Heart right ventricle (tissue), 16 donors: ENCODE measurements at regions of chr12 and their contacts with region 1.

Region 1: GRCh38 chr12:108803428-108804105 is 53.8 kb downstream of the SSH1 start:
- DNase-seq: peak in 1 of 2 donors; percentile 91
- ATAC-seq: peak; percentile 53 to 86 (median 76)
- H3K4me3 ChIP-seq: peak overlapping the region in 3 of 10 donors; percentile 23 to 37 (median 24)
- H3K27ac ChIP-seq: peak overlapping the region; percentile 79 to 91 (median 87)
- H3K4me1 ChIP-seq: peaks cover 20 to 85% (median 61%) of the 10 kb centered on the region in 9 donors
- H3K27me3 ChIP-seq: no peaks in the 10 kb centered on the region
- CTCF ChIP-seq: peak; percentile 92 to 98 (median 96)

Region 2: GRCh38 chr12:108562348-108563135 is 241.0 kb before region 1 on chr12 and contains the start of gene ISCU:
- intact Hi-C with region 1: loop called in 7 of 10 experiments (anchors 2 to 10 kb)
- DNase-seq: peak; percentile 98 to 99
- ATAC-seq: peak; percentile 88 to 95 (median 92)
- H3K4me3 ChIP-seq: peak within 1 kb of the TSS; percentile 57 to 99 (median 90)
- H3K27ac ChIP-seq: peak within 1 kb of the TSS; percentile 78 to 97 (median 94)
- H3K4me1 ChIP-seq: peaks cover 5 to 80% (median 67%) of the 10 kb centered on the region in 9 donors
- H3K27me3 ChIP-seq: no peaks in the 10 kb centered on the region
- CTCF ChIP-seq: no peak
- total RNA-seq, gene ISCU: 321 to 630 (median 522) TPM

Region 3: GRCh38 chr12:108664338-108665258 is 139.0 kb before region 1 on chr12:
- intact Hi-C with region 1: loop called (anchors 1 to 5 kb)
- DNase-seq: peak; percentile 53 to 89
- ATAC-seq: peak; percentile 88 to 96 (median 92)
- H3K4me3 ChIP-seq: peak overlapping the region in 1 of 10 donors; percentile 14
- H3K27ac ChIP-seq: peak overlapping the region; percentile 36 to 86 (median 78)
- H3K4me1 ChIP-seq: peaks cover 7 to 71% (median 56%) of the 10 kb centered on the region in 9 donors
- H3K27me3 ChIP-seq: no peaks in the 10 kb centered on the region
- CTCF ChIP-seq: peak; percentile 79 to 99 (median 95)

Region 4: DNA sequence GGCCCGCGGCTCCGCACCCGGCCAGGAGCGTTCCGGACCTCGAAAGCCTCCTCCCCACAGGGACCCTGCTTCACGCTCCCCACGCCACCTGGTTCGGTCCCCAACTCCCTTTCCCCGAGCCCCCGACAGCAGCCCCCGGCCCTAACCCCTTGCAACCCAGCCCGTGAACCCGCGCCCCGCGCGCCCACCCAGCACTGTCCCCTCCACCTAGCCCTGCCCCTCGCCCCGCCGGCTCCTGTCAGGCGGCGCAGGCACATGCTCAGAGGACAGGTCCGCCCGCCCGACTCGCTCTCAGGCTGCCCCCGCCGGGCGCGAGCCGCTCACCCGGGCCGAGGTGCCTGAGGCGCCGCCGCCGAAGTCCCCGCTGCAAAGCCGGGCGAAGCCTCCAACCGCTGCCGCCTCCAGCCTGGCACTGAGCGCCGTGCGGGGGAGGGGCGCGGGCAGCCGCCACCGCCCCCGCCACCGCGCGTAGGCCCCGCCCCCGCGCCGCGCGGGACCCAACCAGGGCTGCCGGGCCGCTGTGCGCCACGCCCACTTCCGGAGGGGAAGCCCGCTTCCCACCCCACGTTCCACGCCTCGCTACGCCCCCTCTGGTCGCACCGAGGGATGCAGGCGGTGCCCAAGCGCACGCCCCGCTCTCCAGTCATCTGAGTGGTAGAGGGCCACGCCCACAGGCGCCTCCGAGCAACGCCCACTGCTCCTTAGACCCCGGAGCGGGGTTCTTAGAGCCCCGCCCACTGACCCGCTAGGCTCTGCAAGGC is 72.3 kb before region 1 on chr12 and contains the start of gene CORO1C:
- intact Hi-C with region 1: loop called in 7 of 10 experiments (anchors 1 to 5 kb)
- DNase-seq: peak; percentile 96 to 99
- ATAC-seq: peak; percentile 81 to 92 (median 88)
- H3K4me3 ChIP-seq: peak within 1 kb of the TSS; percentile 76 to 98 (median 91)
- H3K27ac ChIP-seq: peak within 1 kb of the TSS; percentile 95 to 99 (median 98)
- H3K4me1 ChIP-seq: peaks cover 0 to 58% (median 27%) of the 10 kb centered on the region in 9 donors
- H3K27me3 ChIP-seq: no peaks in the 10 kb centered on the region
- CTCF ChIP-seq: peak; percentile 76 to 96 (median 93)
- total RNA-seq, gene CORO1C: 50.2 to 88.6 (median 59.1) TPM

Region 5: GRCh38 chr12:108757856-108758255 is 45.7 kb before region 1 on chr12:
- intact Hi-C with region 1: no loop called
- DNase-seq: no peak
- ATAC-seq: no peak
- H3K4me3 ChIP-seq: no peak overlapping the region
- H3K27ac ChIP-seq: no peak overlapping the region
- H3K4me1 ChIP-seq: no peaks in the 10 kb centered on the region
- H3K27me3 ChIP-seq: no peaks in the 10 kb centered on the region
- CTCF ChIP-seq: no peak

Region 6: DNA sequence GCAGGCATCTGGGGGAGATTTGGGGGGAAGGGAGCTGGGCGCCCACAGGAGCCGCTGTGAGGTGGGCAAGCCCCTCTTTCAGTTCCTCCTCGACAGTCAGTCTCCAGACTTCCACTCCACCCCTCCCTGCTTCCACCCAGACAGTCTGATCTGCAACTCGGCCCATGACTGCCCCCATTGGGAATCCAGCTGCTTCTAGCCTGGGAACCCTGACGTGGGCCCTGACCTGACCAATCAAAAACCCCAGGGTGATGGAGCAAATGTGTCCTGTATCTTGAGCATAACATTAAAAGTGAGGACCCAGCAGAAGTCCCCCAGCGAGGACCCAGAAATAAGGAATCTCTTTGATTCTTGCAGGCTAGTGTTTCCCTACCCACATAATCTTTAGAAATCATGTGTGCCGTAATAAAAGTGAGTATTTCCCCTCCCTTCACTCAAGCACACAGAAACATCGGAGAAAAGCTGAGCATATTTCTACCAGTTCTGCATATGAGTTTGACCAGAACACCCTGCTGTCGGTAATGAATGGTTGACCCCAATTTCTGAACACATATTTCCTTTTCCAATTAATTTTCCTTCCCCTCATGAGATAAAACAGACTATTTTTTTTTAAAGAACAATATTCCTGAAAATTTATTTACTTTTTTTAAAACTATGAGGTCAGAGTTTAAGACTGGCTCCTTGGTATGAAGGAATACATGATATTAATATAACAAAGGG is 47.4 kb after region 1 on chr12:
- intact Hi-C with region 1: loop called in 9 of 10 experiments (anchors 1 to 10 kb)
- DNase-seq: peak; percentile 62 to 82
- ATAC-seq: peak in 7 of 8 donors; percentile 20 to 56 (median 53)
- H3K4me3 ChIP-seq: peak overlapping the region in 4 of 10 donors; percentile 35 to 40 (median 39)
- H3K27ac ChIP-seq: peak overlapping the region in 8 of 10 donors; percentile 65 to 98 (median 97)
- H3K4me1 ChIP-seq: peaks cover 50 to 96% (median 89%) of the 10 kb centered on the region in 9 donors
- H3K27me3 ChIP-seq: no peaks in the 10 kb centered on the region
- CTCF ChIP-seq: peak in 5 of 9 donors; percentile 17 to 45 (median 38)

Region 7: GRCh38 chr12:108950991-108951739 is 147.6 kb after region 1 on chr12:
- intact Hi-C with region 1: loop called in 6 of 10 experiments (anchors 1 to 10 kb)
- DNase-seq: peak; percentile 58 to 63
- ATAC-seq: peak; percentile 53 to 81 (median 64)
- H3K4me3 ChIP-seq: peak overlapping the region in 1 of 10 donors; percentile 20
- H3K27ac ChIP-seq: peak overlapping the region in 1 of 10 donors; percentile 39
- H3K4me1 ChIP-seq: peaks cover 0 to 26% (median 12%) of the 10 kb centered on the region in 9 donors
- H3K27me3 ChIP-seq: peaks cover 0 to 3% (median 0%) of the 10 kb centered on the region in 7 donors
- CTCF ChIP-seq: peak; percentile 77 to 96 (median 90)

Region 8: GRCh38 chr12:109004017-109004416 is 200.4 kb after region 1 on chr12:
- intact Hi-C with region 1: no loop called
- DNase-seq: no peak
- ATAC-seq: no peak
- H3K4me3 ChIP-seq: no peak overlapping the region
- H3K27ac ChIP-seq: no peak overlapping the region
- H3K4me1 ChIP-seq: no peaks in the 10 kb centered on the region
- H3K27me3 ChIP-seq: no peaks in the 10 kb centered on the region
- CTCF ChIP-seq: no peak

Region 9: GRCh38 chr12:109093022-109093918 is 289.7 kb after region 1 on chr12 and contains the start of gene ALKBH2:
- intact Hi-C with region 1: loop called in 1 of 10 experiments (anchors 10 kb)
- DNase-seq: peak; percentile 93 to 94
- ATAC-seq: peak; percentile 70 to 84 (median 76)
- H3K4me3 ChIP-seq: peak within 1 kb of the TSS; percentile 29 to 66 (median 60)
- H3K27ac ChIP-seq: peak within 1 kb of the TSS in 9 of 10 donors; percentile 28 to 78 (median 64)
- H3K4me1 ChIP-seq: peaks cover 7 to 35% (median 23%) of the 10 kb centered on the region in 9 donors
- H3K27me3 ChIP-seq: no peaks in the 10 kb centered on the region
- CTCF ChIP-seq: peak; percentile 98 to 100 (median 99)
- total RNA-seq, gene ALKBH2: 5.4 to 11.7 (median 7.1) TPM